Activated CD4-positive, alpha-beta T cell treated with anti-CD3 and anti-CD28 coated beads for 36 hours (primary cell): ENCODE measurements at regions of chr20 and their contacts with region 1.

Region 1: DNA sequence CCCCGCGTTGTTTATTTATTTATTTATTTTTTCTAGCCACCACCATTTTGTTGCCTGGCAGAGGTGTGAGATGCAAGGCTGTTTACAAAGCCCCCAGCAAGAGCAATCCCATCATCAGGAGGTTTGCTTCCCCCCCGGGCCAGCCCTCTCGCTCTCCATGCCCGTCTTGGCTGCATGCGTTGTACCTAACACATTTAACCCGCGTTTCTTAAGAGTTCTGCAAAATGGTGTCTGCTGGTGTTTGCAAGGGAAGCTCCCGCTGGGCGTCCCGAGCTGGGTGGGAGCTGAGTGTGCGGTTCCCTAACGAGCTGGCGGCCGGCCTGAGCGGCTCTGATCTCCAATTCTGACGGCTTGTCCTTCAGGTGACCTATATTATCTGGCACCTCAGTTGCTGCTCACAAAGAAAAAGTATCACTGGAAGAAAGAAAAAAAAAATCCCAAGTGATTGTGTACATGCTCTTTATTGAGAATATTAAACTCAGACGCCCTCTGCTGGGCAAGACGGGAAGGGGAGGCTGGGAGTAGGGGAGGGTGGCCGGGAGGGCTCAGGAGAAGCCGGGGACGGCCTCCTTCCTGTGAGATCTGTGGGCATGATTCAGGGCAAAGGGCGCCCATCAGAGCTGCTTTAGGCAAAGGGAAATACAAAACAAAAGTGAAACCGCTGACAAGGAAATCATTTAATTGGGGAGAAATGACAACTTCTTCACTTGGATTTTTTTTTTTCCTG is 154.8 kb downstream of the BCAS1 start:
- DNase-seq: peak; percentile 98
- ATAC-seq: peak; percentile 96
- H3K4me3 Mint-ChIP-seq: peak overlapping the region; percentile 79
- H3K27ac Mint-ChIP-seq: peak overlapping the region; percentile 91
- H3K4me1 Mint-ChIP-seq: peaks cover 41% of the 10 kb centered on the region
- H3K27me3 Mint-ChIP-seq: no peaks in the 10 kb centered on the region

Region 2: GRCh38 chr20:53578492-53579222 is 337.0 kb before region 1 on chr20:
- CTCF ChIA-PET with region 1: interaction called, 36 read pairs
- POLR2A ChIA-PET with region 1: no interaction called
- intact Hi-C with region 1: loop called (anchors 1 kb)
- DNase-seq: peak; percentile 62
- ATAC-seq: peak; percentile 45
- H3K4me3 Mint-ChIP-seq: peak overlapping the region; percentile 70
- H3K27ac Mint-ChIP-seq: peak overlapping the region; percentile 83
- H3K4me1 Mint-ChIP-seq: peaks cover 91% of the 10 kb centered on the region
- H3K27me3 Mint-ChIP-seq: no peaks in the 10 kb centered on the region

Region 3: DNA sequence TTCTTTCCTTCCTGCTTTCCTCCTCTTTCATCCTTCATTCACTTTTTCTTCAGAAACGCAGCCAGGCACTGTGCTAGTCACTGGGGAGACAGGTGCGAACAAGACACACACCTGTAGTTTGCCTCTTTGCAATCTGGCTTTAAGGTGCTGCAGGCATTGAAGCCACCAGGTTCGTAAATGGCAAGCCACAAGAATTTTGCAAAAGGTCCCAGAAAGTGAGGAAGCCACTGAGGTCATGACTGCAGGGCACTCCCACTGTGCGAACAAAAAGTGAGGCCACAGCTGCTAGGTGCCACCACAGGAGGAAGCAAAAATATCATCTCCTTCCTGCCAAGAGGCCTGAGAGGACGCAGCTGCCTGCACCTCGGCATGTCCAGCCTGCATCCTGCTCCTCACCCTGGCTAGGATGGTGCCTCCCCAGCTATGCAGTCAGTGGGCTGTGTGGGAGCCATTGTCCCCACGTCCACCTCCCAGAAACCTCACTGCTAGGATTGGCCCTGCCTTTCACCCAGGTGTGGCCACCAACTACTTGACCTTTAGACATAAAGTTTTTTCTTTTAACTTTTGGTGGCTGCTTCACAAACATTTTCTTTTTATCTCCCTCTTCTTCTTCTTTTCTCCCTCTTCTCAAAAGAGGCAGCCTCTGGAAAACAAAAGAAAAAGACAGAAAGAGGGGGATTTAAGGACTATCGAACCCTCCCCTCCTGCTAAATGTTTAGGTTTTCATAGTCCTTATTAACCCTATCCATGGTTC is 76.0 kb before region 1 on chr20:
- CTCF ChIA-PET with region 1: interaction called, 15 read pairs
- POLR2A ChIA-PET with region 1: interaction called, 5 read pairs
- intact Hi-C with region 1: loop called in 1 of 2 experiments (anchors 5 kb)
- DNase-seq: peak; percentile 66
- ATAC-seq: peak; percentile 16
- H3K4me3 Mint-ChIP-seq: peak overlapping the region; percentile 45
- H3K27ac Mint-ChIP-seq: peak overlapping the region; percentile 62
- H3K4me1 Mint-ChIP-seq: peaks cover 69% of the 10 kb centered on the region
- H3K27me3 Mint-ChIP-seq: no peaks in the 10 kb centered on the region

Region 4: GRCh38 chr20:53869466-53870258 is 45.9 kb before region 1 on chr20:
- CTCF ChIA-PET with region 1: interaction called, 24 read pairs
- POLR2A ChIA-PET with region 1: interaction called, 4 read pairs
- intact Hi-C with region 1: loop called (anchors 1 to 2 kb)
- DNase-seq: peak; percentile 83
- ATAC-seq: peak; percentile 84
- H3K4me3 Mint-ChIP-seq: peak overlapping the region; percentile 18
- H3K27ac Mint-ChIP-seq: peak overlapping the region; percentile 90
- H3K4me1 Mint-ChIP-seq: peaks cover 75% of the 10 kb centered on the region
- H3K27me3 Mint-ChIP-seq: no peaks in the 10 kb centered on the region

Region 5: GRCh38 chr20:53891306-53891944 is 24.2 kb before region 1 on chr20:
- CTCF ChIA-PET with region 1: interaction called, 9 read pairs
- POLR2A ChIA-PET with region 1: no interaction called
- intact Hi-C with region 1: loop called in 1 of 2 experiments (anchors 1 kb)
- DNase-seq: no peak
- ATAC-seq: no peak
- H3K4me3 Mint-ChIP-seq: no peak overlapping the region
- H3K27ac Mint-ChIP-seq: no peak overlapping the region
- H3K4me1 Mint-ChIP-seq: peaks cover 44% of the 10 kb centered on the region
- H3K27me3 Mint-ChIP-seq: no peaks in the 10 kb centered on the region

Region 6: DNA sequence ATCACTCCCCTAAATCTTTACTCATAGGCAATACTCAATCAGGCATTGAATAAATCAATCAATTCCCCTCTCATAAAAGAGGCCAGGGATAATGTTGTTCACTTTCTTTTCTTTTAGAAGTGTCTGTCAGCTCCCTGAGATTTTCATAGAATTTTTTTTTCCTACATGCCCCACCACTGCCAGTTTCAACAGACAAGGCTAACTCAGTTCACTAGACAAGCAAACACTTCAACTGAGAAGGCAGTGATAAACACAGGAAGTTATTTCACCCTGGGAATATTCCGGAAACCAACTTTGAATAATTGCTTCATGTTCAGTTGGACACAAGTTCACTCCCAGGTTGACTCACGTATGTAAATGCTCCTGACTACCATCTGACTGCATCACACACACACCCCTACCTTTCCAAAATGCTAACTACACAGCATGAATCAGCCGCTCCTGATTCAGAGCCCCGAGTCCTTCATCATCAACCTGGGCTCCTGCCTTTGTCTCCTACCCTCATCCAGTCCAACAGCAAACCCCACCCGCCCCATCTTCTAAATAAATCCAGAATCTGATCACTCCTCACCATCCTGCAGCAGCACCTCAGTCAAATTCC is 10.9 kb after region 1 on chr20:
- CTCF ChIA-PET with region 1: interaction called, 12 read pairs
- POLR2A ChIA-PET with region 1: no interaction called
- intact Hi-C with region 1: loop called in 1 of 2 experiments (anchors 1 kb)
- DNase-seq: peak; percentile 66
- ATAC-seq: peak; percentile 99
- H3K4me3 Mint-ChIP-seq: no peak overlapping the region
- H3K27ac Mint-ChIP-seq: peak overlapping the region; percentile 61
- H3K4me1 Mint-ChIP-seq: peaks cover 32% of the 10 kb centered on the region
- H3K27me3 Mint-ChIP-seq: no peaks in the 10 kb centered on the region

Region 7: DNA sequence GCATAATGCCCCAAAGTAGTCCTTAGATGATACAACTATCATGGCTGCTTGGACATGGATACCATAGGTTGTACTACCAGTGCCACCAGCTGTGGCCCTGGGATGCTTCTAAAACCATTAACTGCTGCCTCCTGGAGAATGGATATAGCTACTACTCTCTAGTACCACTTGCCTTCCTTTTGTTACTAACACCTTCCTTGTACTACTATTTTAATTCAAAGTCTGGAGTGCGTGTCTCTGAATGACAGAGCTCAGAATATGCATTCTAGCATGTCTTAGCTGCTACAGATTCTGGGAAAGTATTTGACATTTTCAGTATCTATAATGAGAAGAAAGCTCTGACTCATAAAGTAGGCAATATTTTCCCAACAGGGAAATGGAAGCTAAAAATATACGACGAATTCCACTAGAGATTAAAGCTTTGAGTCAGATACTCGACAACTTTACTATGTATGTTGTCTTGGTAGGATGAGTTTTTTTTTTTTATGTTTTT is 404.6 kb after region 1 on chr20:
- CTCF ChIA-PET with region 1: no interaction called
- POLR2A ChIA-PET with region 1: interaction called, 10 read pairs
- intact Hi-C with region 1: no loop called
- DNase-seq: peak; percentile 8
- ATAC-seq: peak; percentile 83
- H3K4me3 Mint-ChIP-seq: no peak overlapping the region
- H3K27ac Mint-ChIP-seq: peak overlapping the region; percentile 70
- H3K4me1 Mint-ChIP-seq: peaks cover 47% of the 10 kb centered on the region
- H3K27me3 Mint-ChIP-seq: peaks cover 23% of the 10 kb centered on the region

Region 8: DNA sequence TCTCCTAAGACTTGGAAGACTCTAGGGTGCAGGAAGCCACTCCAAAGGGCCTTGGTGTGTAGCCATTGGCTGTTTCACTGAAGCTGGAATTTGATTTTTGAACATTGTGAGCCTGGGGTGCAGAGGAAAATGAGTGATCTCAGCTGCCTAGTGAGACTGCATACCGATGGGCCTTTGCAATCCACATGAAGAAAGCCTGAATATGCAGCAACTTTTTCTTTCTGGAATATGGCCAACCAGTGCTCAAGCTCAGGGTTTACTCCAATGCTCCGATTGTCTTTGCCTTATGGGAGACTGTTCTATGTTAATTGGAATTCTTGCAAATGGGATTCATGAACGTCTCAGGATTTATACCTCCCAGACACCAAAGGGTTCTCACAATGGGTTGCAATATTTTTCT is 802.4 kb after region 1 on chr20:
- CTCF ChIA-PET with region 1: no interaction called
- POLR2A ChIA-PET with region 1: no interaction called
- intact Hi-C with region 1: no loop called
- DNase-seq: no peak
- ATAC-seq: no peak
- H3K4me3 Mint-ChIP-seq: no peak overlapping the region
- H3K27ac Mint-ChIP-seq: no peak overlapping the region
- H3K4me1 Mint-ChIP-seq: no peaks in the 10 kb centered on the region
- H3K27me3 Mint-ChIP-seq: peaks cover 11% of the 10 kb centered on the region